ENCODE measurements at regions of chr1 and their contacts with region 1.

Region 1: GRCh38 chr1:201551877-201552731 is 13.2 kb downstream of the NAV1 start:
- DNase-seq: peak; percentile 89
- H3K4me3 Mint-ChIP-seq: peak overlapping the region; percentile 6
- H3K27ac Mint-ChIP-seq: peak overlapping the region; percentile 83
- H3K4me1 Mint-ChIP-seq: peaks cover 58% of the 10 kb centered on the region
- H3K27me3 Mint-ChIP-seq: no peaks in the 10 kb centered on the region
- CTCF ChIP-seq: no peak

Region 2: GRCh38 chr1:201538612-201539551 is 13.2 kb before region 1 on chr1 and contains the start of gene NAV1:
- CTCF ChIA-PET with region 1: interaction called, 10 read pairs
- intact Hi-C with region 1: no loop called
- DNase-seq: peak; percentile 67
- H3K4me3 Mint-ChIP-seq: peak within 1 kb of the TSS; percentile 85
- H3K27ac Mint-ChIP-seq: peak within 1 kb of the TSS; percentile 13
- H3K4me1 Mint-ChIP-seq: peaks cover 64% of the 10 kb centered on the region
- H3K27me3 Mint-ChIP-seq: no peaks in the 10 kb centered on the region
- CTCF ChIP-seq: no peak
- total RNA-seq, gene NAV1: 13.1 and 24.8 TPM in 2 replicates